Ascending aorta (tissue), 2 donors: ENCODE measurements at regions of chr14 and their contacts with region 1.

Region 1: GRCh38 chr14:24232121-24232644 is at the start of gene NEDD8:
- DNase-seq: peak; percentile 87 to 97
- H3K4me3 ChIP-seq: peak within 1 kb of the TSS; percentile 85 to 90
- H3K27ac ChIP-seq: peak within 1 kb of the TSS; percentile 86 to 89
- H3K4me1 ChIP-seq: peaks cover 10 to 20% of the 10 kb centered on the region in 2 donors
- H3K27me3 ChIP-seq: no peaks in the 10 kb centered on the region
- CTCF ChIP-seq: no peak
- total RNA-seq, gene NEDD8: 72.8 TPM

Region 2: DNA sequence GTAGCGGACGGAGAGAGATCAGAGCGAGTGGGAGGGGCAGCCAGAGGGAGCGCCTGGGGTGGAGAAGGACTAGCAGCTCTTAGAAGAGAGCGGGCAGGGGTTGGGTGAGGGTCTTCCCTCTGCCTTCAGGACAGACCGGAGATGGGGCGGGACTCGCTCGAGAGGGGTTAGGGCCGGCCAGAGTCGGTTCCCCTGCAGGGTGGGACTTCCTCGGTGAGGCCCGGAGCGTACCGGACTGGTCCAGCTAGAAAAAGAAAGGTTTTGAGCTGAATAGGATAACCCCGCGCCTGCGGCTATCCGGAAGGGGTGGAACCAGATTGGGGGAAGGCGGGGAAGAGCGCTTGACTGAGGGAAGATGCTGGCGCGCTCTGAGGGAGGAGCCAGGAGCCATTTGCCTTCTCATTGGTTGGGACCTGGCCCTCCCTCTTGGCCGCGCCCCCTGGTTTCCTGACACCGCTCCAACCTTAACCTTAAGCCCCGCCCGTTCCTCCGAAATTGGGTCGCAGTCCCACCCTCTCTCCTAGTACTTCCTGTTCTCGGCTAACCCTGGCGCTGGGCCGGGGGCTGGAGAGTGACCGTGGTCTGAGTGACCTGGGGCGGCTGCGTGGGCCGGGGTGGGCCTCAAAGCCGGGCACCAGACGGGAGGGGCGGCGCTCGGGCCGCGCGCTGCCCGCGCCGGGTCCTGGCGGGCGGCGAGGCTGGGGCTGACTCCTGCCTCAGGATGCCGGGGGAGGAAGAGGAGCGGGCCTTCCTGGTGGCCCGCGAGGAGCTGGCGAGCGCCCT is 85.0 kb before region 1 on chr14 and contains the start of gene RNF31:
- intact Hi-C with region 1: loop called (anchors 5 kb)
- DNase-seq: peak; percentile 95 to 99
- H3K4me3 ChIP-seq: peak within 1 kb of the TSS; percentile 76 to 100
- H3K27ac ChIP-seq: peak within 1 kb of the TSS; percentile 75 to 90
- H3K4me1 ChIP-seq: peaks cover 21 to 23% of the 10 kb centered on the region in 2 donors
- H3K27me3 ChIP-seq: no peaks in the 10 kb centered on the region
- CTCF ChIP-seq: no peak
- total RNA-seq, gene RNF31: 182 TPM

Region 3: DNA sequence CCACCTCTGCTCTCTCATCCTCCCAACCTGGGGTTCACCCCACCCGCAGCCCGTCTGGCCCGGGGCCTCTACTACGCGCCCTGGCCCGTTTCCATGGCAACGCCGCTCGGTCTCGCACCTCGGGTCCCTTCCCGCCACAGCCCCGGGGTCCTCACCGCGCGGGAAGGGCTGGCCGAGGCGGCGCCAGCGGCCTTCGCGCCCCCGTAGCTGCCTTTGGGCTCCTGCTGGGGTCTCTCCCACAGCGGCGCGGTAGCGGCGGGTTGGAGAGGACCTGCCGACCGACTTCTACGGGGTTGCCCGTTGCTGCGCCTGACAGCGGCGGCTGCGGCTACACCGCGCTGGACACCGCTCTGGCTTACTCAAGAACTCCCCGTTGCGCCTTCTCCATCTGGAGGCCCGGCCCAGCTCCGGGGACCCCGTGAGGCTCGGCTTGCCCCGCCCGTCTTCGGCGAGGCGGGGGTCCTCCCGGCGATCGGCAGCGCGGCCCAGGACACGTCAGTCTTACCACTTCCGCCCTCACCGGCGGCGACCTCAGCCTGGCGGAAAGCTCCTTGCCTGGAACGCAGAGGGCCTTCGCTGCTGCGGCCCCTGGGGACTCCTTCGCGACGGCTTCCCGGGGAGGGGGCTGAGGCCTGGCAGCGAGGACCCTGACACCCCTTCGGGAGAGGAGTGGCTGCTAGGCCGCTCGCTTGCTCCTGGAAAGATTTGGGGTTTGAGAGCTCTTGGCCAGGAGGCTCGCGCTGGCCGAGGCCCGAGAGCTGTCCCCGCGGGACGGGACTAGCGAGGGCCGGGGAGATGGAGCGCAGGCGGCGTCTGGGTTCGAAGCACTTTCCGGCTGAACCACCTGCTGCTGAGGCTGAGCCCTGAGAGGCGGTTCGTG is 36.8 kb before region 1 on chr14 and contains the start of gene TM9SF1:
- intact Hi-C with region 1: loop called (anchors 1 kb)
- DNase-seq: peak; percentile 26 to 94
- H3K4me3 ChIP-seq: peak within 1 kb of the TSS; percentile 81 to 98
- H3K27ac ChIP-seq: peak within 1 kb of the TSS; percentile 97 to 99
- H3K4me1 ChIP-seq: peaks cover 8 to 25% of the 10 kb centered on the region in 2 donors
- H3K27me3 ChIP-seq: no peaks in the 10 kb centered on the region
- CTCF ChIP-seq: no peak
- total RNA-seq, gene TM9SF1: 86.5 TPM

Region 4: GRCh38 chr14:24215495-24216344 is 16.5 kb before region 1 on chr14 and contains the start of gene MDP1:
- intact Hi-C with region 1: loop called (anchors 1 kb)
- DNase-seq: peak; percentile 53 to 92
- H3K4me3 ChIP-seq: peak within 1 kb of the TSS; percentile 84 to 88
- H3K27ac ChIP-seq: peak within 1 kb of the TSS; percentile 87 to 93
- H3K4me1 ChIP-seq: peaks cover 3 to 29% of the 10 kb centered on the region in 2 donors
- H3K27me3 ChIP-seq: no peaks in the 10 kb centered on the region
- CTCF ChIP-seq: peak in 2 of 3 experiments; percentile 44 to 60
- total RNA-seq, gene MDP1: 58.8 TPM

Region 5: GRCh38 chr14:24271134-24271833 is 39.1 kb after region 1 on chr14 and contains the start of gene RABGGTA:
- intact Hi-C with region 1: loop called (anchors 5 kb)
- DNase-seq: peak; percentile 50 to 89
- H3K4me3 ChIP-seq: peak within 1 kb of the TSS; percentile 74 to 91
- H3K27ac ChIP-seq: peak within 1 kb of the TSS; percentile 92 to 96
- H3K4me1 ChIP-seq: peaks cover 0 to 8% of the 10 kb centered on the region in 2 donors
- H3K27me3 ChIP-seq: no peaks in the 10 kb centered on the region
- CTCF ChIP-seq: peak; percentile 66 to 80 (median 72)
- total RNA-seq, gene RABGGTA: 54.9 TPM